Panc1 (cell line): ENCODE measurements at regions of chr2 and their contacts with region 1.

Region 1: DNA sequence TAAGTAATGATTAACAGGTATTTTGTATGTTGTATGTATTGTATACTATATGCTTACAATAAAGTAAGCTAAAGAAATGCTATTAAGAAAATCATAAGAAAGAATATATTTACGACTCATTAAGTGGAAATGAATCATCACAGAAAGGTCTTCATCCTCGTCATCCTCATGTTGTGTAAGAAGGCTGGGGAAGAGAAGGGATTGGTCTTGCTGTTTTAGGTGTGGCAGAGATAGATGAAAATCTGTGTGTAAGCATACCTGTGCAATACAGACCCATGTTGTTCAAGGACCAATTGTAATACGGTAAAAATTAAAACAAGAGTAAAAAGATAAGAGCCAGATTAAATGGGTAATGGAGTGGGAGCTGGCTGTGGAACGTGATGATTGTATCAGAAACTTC is 16.6 kb downstream of the SLC35F5 start:
- DNase-seq: no peak
- ATAC-seq: no peak
- H3K4me3 ChIP-seq: no peak overlapping the region
- H3K27ac ChIP-seq: no peak overlapping the region
- H3K4me1 ChIP-seq: no peaks in the 10 kb centered on the region
- H3K27me3 ChIP-seq: no peaks in the 10 kb centered on the region
- CTCF ChIP-seq: no peak

Region 2: DNA sequence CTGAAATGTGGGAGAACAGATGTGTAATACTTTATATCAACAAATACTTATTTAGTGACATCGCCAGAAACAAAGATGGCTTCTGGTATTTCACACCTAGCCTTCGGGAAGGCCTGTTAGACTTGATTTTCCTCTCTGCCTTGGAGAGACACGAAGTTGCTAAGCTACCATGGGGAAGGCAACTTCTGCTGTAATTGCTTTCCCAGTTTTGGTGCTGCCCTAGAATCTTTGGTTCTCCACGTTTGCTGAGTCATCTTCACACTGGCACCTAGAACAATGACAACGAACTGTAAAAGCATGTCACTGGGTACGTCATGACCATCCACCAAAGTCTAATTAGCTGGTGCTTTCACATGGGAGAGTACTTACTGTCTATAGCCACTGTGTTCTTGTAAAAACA is 91.3 kb after region 1 on chr2:
- CTCF ChIA-PET with region 1: interaction called, 11 read pairs
- POLR2A ChIA-PET with region 1: no interaction called
- in situ Hi-C with region 1: no loop called
- intact Hi-C with region 1: no loop called
- DNase-seq: no peak
- ATAC-seq: no peak
- H3K4me3 ChIP-seq: no peak overlapping the region
- H3K27ac ChIP-seq: no peak overlapping the region; the same call in 1 of the 2 replicates
- H3K4me1 ChIP-seq: 0 out of 2 replicates have a peak, but pooled peaks cover 2% of the 10 kb centered on the region
- H3K27me3 ChIP-seq: no peaks in the 10 kb centered on the region
- CTCF ChIP-seq: no peak

Region 3: DNA sequence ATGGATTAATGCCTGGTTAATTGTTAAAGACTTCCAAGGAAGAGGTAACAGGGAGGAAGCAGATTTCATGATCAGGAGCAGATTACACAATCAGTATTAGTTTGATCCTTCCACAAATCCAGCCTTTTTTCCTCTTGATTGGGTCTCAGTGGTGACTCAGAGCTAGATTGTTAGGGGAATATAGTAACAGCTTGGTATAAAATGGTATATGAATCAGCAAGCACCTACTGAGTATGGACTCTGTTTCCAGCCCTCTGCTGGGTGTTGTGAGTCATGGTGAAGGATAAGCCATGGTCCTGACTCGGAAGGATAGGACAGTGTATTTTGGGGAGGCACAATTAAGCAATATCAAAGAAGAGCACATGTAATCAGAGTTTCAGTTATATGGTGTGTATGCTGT is 430.2 kb after region 1 on chr2:
- CTCF ChIA-PET with region 1: no interaction called
- POLR2A ChIA-PET with region 1: no interaction called
- in situ Hi-C with region 1: no loop called
- intact Hi-C with region 1: no loop called
- DNase-seq: no peak
- ATAC-seq: no peak
- H3K4me3 ChIP-seq: no peak overlapping the region
- H3K27ac ChIP-seq: no peak overlapping the region
- H3K4me1 ChIP-seq: no peaks in the 10 kb centered on the region
- H3K27me3 ChIP-seq: no peaks in the 10 kb centered on the region
- CTCF ChIP-seq: no peak